Activated naive CD4-positive, alpha-beta T cell treated with anti-CD3 and anti-CD28 coated beads for 36 hours (primary cell): ENCODE measurements at regions of chr1 and their contacts with region 1.

Region 1: GRCh38 chr1:160291248-160292220 is 6.6 kb upstream of the PEX19 start:
- DNase-seq: peak; percentile 83
- H3K4me3 Mint-ChIP-seq: no peak overlapping the region
- H3K27ac Mint-ChIP-seq: peak overlapping the region; percentile 46
- H3K4me1 Mint-ChIP-seq: peaks cover 4% of the 10 kb centered on the region
- H3K27me3 Mint-ChIP-seq: no peaks in the 10 kb centered on the region

Region 2: GRCh38 chr1:160108888-160109662 is 182.5 kb before region 1 on chr1:
- CTCF ChIA-PET with region 1: interaction called, 87 read pairs
- intact Hi-C with region 1: no loop called
- DNase-seq: peak; percentile 63
- H3K4me3 Mint-ChIP-seq: no peak overlapping the region
- H3K27ac Mint-ChIP-seq: peak overlapping the region; percentile 32
- H3K4me1 Mint-ChIP-seq: peaks cover 6% of the 10 kb centered on the region
- H3K27me3 Mint-ChIP-seq: no peaks in the 10 kb centered on the region

Region 3: DNA sequence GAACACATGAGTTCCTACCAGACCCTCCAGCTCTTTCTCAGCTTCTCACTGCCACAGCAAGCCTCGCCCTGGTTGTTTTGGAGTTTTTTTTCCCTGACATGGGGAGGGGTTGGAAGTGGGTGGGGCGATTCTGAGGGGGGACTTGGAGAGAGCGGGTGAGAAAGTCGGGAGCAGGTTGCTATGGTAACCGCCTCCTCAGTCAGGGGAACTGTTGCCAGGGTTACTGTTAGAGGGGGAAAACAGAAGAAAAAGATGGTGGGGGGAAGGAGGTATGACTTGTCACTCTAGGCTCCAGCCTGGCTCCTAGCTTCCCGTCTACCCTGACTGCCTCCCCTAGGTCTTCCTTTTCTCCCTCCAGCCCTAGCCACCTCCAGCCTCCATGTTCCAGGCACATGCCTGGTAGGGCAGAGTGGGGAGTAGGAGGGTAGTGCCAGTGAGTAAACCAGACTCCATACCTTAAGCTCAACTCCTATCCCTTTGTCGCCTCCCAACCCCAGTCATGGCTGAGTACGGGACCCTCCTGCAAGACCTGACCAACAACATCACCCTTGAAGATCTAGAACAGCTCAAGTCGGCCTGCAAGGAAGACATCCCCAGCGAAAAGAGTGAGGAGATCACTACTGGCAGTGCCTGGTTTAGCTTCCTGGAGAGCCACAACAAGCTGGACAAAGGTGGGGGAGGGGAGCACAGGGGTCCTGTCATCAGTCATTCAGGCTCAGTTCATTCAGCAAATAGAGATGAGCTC is 80.3 kb before region 1 on chr1:
- CTCF ChIA-PET with region 1: interaction called, 39 read pairs
- intact Hi-C with region 1: no loop called
- DNase-seq: no peak
- H3K4me3 Mint-ChIP-seq: no peak overlapping the region
- H3K27ac Mint-ChIP-seq: peak overlapping the region; percentile 10
- H3K4me1 Mint-ChIP-seq: peaks cover 39% of the 10 kb centered on the region
- H3K27me3 Mint-ChIP-seq: no peaks in the 10 kb centered on the region

Region 4: DNA sequence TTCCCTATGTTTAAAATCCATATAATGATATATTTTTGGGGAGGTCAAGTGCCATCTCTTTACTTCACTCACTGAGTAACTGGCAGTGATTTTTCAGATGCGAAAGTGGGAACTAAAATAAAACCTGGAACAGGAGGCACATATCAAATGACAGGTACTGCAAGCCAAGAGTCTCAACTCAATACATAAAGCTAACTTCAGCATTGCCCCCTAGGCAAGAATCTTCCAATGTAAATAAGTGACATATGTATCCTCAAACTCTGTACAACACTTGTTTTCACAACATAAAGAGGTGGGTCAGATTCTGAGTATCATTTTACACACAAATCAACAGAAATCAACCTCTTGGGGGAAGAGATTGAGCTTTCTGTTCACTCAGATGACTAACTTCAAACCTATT is 47.3 kb before region 1 on chr1:
- CTCF ChIA-PET with region 1: interaction called, 39 read pairs
- intact Hi-C with region 1: no loop called
- DNase-seq: no peak
- H3K4me3 Mint-ChIP-seq: no peak overlapping the region
- H3K27ac Mint-ChIP-seq: no peak overlapping the region
- H3K4me1 Mint-ChIP-seq: peaks cover 12% of the 10 kb centered on the region
- H3K27me3 Mint-ChIP-seq: no peaks in the 10 kb centered on the region

Region 5: GRCh38 chr1:160271025-160271424 is 20.5 kb before region 1 on chr1:
- CTCF ChIA-PET with region 1: interaction called, 27 read pairs
- intact Hi-C with region 1: no loop called
- DNase-seq: no peak
- H3K4me3 Mint-ChIP-seq: no peak overlapping the region
- H3K27ac Mint-ChIP-seq: no peak overlapping the region
- H3K4me1 Mint-ChIP-seq: no peaks in the 10 kb centered on the region
- H3K27me3 Mint-ChIP-seq: no peaks in the 10 kb centered on the region

Region 6: DNA sequence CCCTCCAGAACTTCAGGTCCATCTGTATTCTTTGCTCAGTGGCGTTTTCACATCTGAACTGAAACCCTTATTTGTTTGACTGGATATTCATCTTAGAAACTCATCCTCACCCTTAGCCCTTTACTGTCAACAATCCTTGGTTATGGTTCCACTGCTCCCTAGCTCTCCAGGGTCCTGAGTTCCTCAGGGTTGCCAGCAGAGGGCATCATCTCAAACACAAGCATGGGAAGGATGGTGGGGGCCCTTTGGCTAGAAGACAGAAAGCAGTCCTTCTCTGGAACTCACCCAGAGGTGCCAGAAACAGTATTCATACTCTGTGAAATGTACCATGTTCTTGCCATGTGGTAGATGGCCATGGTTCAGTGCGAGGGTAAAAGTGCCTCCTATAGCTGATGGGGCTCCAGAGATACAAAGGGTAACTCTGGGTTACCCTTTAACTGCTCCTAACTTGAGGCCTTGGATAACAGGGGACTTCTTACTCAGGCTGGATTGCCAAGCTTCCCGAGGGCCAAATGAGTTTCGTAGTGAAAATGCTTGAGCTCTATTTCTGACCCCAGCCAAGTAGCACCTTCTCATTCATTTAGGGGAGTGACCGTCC is 63.0 kb after region 1 on chr1:
- CTCF ChIA-PET with region 1: interaction called, 16 read pairs
- intact Hi-C with region 1: no loop called
- DNase-seq: peak; percentile 22
- H3K4me3 Mint-ChIP-seq: no peak overlapping the region
- H3K27ac Mint-ChIP-seq: no peak overlapping the region
- H3K4me1 Mint-ChIP-seq: no peaks in the 10 kb centered on the region
- H3K27me3 Mint-ChIP-seq: no peaks in the 10 kb centered on the region

Region 7: DNA sequence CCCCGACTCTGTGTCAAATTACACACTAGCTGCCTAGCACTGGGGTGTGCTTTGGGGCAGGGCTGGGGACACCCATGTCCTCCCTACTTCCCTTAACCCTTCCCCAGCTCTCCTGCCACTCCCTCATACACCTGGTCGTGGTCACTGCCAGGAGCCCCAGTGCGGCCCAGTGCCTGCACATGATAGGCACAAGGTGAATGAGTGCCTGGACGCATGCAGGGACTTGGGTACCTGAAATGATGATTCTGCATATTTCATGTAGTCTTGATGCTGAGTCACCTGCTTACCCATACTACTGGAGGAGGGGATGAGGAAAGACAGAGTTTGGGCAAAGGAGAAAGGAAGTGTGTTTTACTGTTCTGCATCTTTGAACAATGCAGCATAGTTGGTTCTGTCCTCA is 107.3 kb after region 1 on chr1:
- CTCF ChIA-PET with region 1: no interaction called
- intact Hi-C with region 1: no loop called
- DNase-seq: no peak
- H3K4me3 Mint-ChIP-seq: no peak overlapping the region
- H3K27ac Mint-ChIP-seq: no peak overlapping the region
- H3K4me1 Mint-ChIP-seq: peaks cover 3% of the 10 kb centered on the region
- H3K27me3 Mint-ChIP-seq: peaks cover 13% of the 10 kb centered on the region